MCF 10A (cell line): ENCODE measurements at regions of chr1 and their contacts with region 1.

Region 1: DNA sequence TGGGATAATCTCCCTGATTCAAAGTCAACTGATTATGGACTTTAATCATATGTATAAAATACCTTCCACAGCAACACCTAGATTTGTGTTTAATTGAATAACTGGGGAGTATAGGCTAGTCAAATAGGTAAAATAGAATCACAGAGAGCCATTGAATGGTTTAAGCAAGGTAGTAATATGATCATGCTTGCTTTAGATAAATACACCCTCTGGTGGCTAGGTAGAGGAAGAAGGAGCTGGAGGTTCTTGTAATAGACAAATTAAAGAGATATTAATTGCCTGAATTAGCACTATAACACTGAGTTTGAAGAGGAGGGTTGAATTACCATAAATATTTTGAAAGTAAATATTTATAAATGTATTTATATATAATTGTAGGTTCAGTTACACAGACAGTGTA is 40.3 kb downstream of the DIRAS3 start:
- DNase-seq: peak; percentile 40
- H3K4me3 Mint-ChIP-seq: no peak overlapping the region
- H3K27ac Mint-ChIP-seq: no peak overlapping the region
- H3K4me1 Mint-ChIP-seq: no peaks in the 10 kb centered on the region
- H3K27me3 Mint-ChIP-seq: no peaks in the 10 kb centered on the region
- CTCF ChIP-seq: peak; percentile 34

Region 2: DNA sequence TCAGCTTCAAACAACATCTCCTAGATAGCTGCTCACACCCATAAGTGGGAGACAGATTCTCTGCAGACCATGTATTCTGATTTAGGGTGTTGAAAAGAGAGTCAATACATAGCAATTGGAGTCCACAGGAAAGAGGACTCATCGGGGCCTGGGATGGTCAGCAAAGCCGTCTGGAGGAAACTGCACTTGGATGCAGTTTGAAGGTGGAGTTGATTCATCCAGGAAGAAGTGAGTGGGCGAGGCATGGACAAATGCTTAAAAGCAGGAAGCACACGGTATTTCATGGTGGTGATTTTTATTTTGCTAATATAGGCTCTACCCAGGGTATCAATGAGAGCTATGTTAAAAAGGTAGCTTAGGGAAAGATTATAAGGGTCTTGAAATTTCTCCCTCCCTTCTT is 77.1 kb after region 1 on chr1:
- CTCF ChIA-PET with region 1: no interaction called
- POLR2A ChIA-PET with region 1: no interaction called
- intact Hi-C with region 1: no loop called
- DNase-seq: no peak
- H3K4me3 Mint-ChIP-seq: no peak overlapping the region
- H3K27ac Mint-ChIP-seq: no peak overlapping the region
- H3K4me1 Mint-ChIP-seq: no peaks in the 10 kb centered on the region
- H3K27me3 Mint-ChIP-seq: no peaks in the 10 kb centered on the region
- CTCF ChIP-seq: no peak

Region 3: DNA sequence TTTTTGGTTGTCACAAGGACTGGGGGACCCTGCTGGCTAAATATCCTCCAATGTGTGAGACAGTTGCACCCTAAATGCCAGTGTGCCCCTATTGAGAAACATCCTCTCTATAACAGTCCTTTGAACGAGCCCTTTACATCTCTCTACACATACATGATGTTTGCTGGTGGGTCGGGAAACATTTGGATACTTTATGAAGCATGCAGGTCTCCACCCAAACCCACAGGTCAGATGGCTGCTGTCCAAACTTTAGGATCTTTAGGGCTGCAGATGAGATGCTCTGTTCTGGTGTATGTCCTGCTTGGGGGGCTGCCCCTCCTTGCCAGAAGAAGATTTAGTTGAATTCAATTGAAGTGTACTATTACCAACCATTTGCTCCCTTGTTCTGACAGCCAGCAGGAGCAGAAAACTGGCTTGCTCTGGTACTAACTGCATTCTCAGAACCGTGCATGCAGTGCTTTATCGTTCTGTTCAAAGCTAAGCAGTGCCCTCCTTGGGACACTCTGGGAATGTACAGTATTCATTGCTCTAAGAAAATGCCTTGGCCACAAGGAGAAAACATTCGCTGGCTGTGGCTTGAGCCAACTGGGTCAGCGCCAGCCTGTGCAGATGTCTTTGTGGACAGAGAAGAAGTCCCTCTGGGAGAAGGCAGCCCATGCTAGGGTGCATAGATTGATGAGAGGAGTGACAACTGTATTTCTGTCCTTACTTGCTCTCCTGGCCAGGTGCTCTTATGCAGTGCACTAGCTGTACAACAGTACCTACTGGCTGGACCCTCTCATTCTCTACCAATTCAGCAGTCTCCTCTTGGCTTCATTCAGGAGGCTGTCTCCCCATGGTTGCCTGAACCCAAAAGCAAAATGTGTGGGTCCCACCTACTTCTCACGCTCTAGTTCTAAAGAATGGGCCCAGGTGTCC is 101.7 kb after region 1 on chr1:
- CTCF ChIA-PET with region 1: interaction called, 7 read pairs
- POLR2A ChIA-PET with region 1: no interaction called
- intact Hi-C with region 1: loop called (anchors 5 kb)
- DNase-seq: peak; percentile 79
- H3K4me3 Mint-ChIP-seq: no peak overlapping the region
- H3K27ac Mint-ChIP-seq: no peak overlapping the region
- H3K4me1 Mint-ChIP-seq: peaks cover 19% of the 10 kb centered on the region
- H3K27me3 Mint-ChIP-seq: no peaks in the 10 kb centered on the region
- CTCF ChIP-seq: peak; percentile 65

Region 4: GRCh38 chr1:68213843-68214242 is 203.8 kb after region 1 on chr1:
- CTCF ChIA-PET with region 1: no interaction called
- POLR2A ChIA-PET with region 1: no interaction called
- intact Hi-C with region 1: no loop called
- DNase-seq: peak; percentile 86
- H3K4me3 Mint-ChIP-seq: peak overlapping the region; percentile 1
- H3K27ac Mint-ChIP-seq: peak overlapping the region; percentile 84
- H3K4me1 Mint-ChIP-seq: peaks cover 17% of the 10 kb centered on the region
- H3K27me3 Mint-ChIP-seq: no peaks in the 10 kb centered on the region
- CTCF ChIP-seq: no peak

Region 5: DNA sequence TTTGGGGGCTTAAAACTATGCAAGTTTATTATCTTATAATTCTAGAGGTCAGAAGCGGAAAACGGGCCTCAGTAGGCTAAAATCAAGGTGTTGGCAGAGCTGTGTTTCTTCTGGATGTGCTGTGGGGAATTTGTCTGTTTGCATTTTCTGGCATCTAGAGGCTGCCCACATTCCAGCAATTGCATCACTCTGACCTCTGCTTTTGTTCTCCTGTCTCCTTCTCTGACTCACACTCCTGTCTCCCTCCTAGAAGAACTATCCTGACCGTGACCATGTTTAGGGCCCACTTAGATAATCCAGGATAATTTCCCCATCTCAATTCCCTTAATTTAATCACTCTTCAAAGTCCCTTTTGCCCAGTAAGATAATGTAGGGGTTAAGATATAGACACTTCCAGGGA is 614.1 kb after region 1 on chr1:
- CTCF ChIA-PET with region 1: no interaction called
- POLR2A ChIA-PET with region 1: no interaction called
- intact Hi-C with region 1: no loop called
- DNase-seq: peak; percentile 54
- H3K4me3 Mint-ChIP-seq: no peak overlapping the region
- H3K27ac Mint-ChIP-seq: no peak overlapping the region
- H3K4me1 Mint-ChIP-seq: peaks cover 6% of the 10 kb centered on the region
- H3K27me3 Mint-ChIP-seq: no peaks in the 10 kb centered on the region
- CTCF ChIP-seq: no peak